Calu3 (cell line): ENCODE measurements at regions of chr6 and their contacts with region 1.

Region 1: GRCh38 chr6:150334790-150335783 is 33.7 kb upstream of the IYD start:
- DNase-seq: peak; percentile 46
- H3K4me3 Mint-ChIP-seq: no peak overlapping the region
- H3K27ac Mint-ChIP-seq: no peak overlapping the region
- H3K4me1 Mint-ChIP-seq: peaks cover 19% of the 10 kb centered on the region
- H3K27me3 Mint-ChIP-seq: no peaks in the 10 kb centered on the region
- CTCF ChIP-seq: peak; percentile 47

Region 2: GRCh38 chr6:150004783-150005717 is 330.0 kb before region 1 on chr6:
- CTCF ChIA-PET with region 1: no interaction called
- intact Hi-C with region 1: no loop called
- DNase-seq: peak; percentile 93
- H3K4me3 Mint-ChIP-seq: peak overlapping the region; percentile 84
- H3K27ac Mint-ChIP-seq: peak overlapping the region; percentile 69
- H3K4me1 Mint-ChIP-seq: peaks cover 7% of the 10 kb centered on the region
- H3K27me3 Mint-ChIP-seq: peaks cover 9% of the 10 kb centered on the region
- CTCF ChIP-seq: no peak

Region 3: DNA sequence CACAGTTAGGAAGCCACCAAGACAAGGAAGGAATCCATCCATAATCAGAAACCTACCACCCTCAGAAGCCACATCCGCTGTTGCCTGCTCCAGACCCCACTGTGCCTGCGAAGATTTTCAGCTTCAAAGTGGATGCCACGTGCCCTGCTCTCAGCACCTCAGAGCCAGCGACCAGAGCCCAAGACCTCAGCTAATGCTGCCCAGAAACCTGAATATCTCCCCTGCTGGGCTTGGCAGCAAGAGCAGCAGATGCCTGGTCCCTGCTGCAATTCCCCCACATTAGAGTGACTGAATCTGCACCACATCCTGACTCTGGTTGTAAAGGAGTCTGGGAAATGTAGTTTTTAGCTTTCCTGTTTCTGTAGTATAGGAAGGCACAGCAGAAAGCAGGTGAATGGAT is 255.5 kb before region 1 on chr6:
- CTCF ChIA-PET with region 1: interaction called, 11 read pairs
- intact Hi-C with region 1: loop called (anchors 1 kb)
- DNase-seq: no peak
- H3K4me3 Mint-ChIP-seq: no peak overlapping the region
- H3K27ac Mint-ChIP-seq: no peak overlapping the region
- H3K4me1 Mint-ChIP-seq: no peaks in the 10 kb centered on the region
- H3K27me3 Mint-ChIP-seq: peaks cover 16% of the 10 kb centered on the region
- CTCF ChIP-seq: no peak

Region 4: GRCh38 chr6:150417899-150418826 is 83.1 kb after region 1 on chr6:
- CTCF ChIA-PET with region 1: no interaction called
- intact Hi-C with region 1: no loop called
- DNase-seq: peak; percentile 15
- H3K4me3 Mint-ChIP-seq: peak overlapping the region; percentile 57
- H3K27ac Mint-ChIP-seq: peak overlapping the region; percentile 89
- H3K4me1 Mint-ChIP-seq: peaks cover 24% of the 10 kb centered on the region
- H3K27me3 Mint-ChIP-seq: no peaks in the 10 kb centered on the region
- CTCF ChIP-seq: peak; percentile 42

Region 5: GRCh38 chr6:151738960-151739359 is 1403.9 kb after region 1 on chr6:
- CTCF ChIA-PET with region 1: no interaction called
- intact Hi-C with region 1: no loop called
- DNase-seq: no peak
- H3K4me3 Mint-ChIP-seq: no peak overlapping the region
- H3K27ac Mint-ChIP-seq: no peak overlapping the region
- H3K4me1 Mint-ChIP-seq: no peaks in the 10 kb centered on the region
- H3K27me3 Mint-ChIP-seq: peaks cover 15% of the 10 kb centered on the region
- CTCF ChIP-seq: no peak